ENCODE measurements at regions of chr3 and their contacts with region 1.

Region 1: GRCh38 chr3:154886437-154886836 is 193.7 kb upstream of the MME start:
- DNase-seq: peak; percentile 100
- ATAC-seq: peak; percentile 95
- H3K4me3 ChIP-seq: no peak overlapping the region
- H3K27ac ChIP-seq: peak overlapping the region; percentile 59
- H3K4me1 ChIP-seq: peaks cover 7% of the 10 kb centered on the region
- H3K27me3 ChIP-seq: no peaks in the 10 kb centered on the region
- CTCF ChIP-seq: no peak
- POLR2A ChIP-seq: peak; percentile 48; the same call in 1 of the 2 replicates
- RAD21 ChIP-seq: no peak

Region 2: GRCh38 chr3:154294016-154294415 is 592.4 kb before region 1 on chr3:
- CTCF ChIA-PET with region 1: no interaction called
- POLR2A ChIA-PET with region 1: no interaction called
- dilution Hi-C with region 1: no loop called
- in situ Hi-C with region 1: no loop called
- intact Hi-C with region 1: no loop called
- DNase-seq: no peak
- ATAC-seq: no peak
- H3K4me3 ChIP-seq: no peak overlapping the region
- H3K27ac ChIP-seq: no peak overlapping the region
- H3K4me1 ChIP-seq: no peaks in the 10 kb centered on the region
- H3K27me3 ChIP-seq: no peaks in the 10 kb centered on the region
- CTCF ChIP-seq: no peak
- POLR2A ChIP-seq: no peak
- RAD21 ChIP-seq: no peak

Region 3: DNA sequence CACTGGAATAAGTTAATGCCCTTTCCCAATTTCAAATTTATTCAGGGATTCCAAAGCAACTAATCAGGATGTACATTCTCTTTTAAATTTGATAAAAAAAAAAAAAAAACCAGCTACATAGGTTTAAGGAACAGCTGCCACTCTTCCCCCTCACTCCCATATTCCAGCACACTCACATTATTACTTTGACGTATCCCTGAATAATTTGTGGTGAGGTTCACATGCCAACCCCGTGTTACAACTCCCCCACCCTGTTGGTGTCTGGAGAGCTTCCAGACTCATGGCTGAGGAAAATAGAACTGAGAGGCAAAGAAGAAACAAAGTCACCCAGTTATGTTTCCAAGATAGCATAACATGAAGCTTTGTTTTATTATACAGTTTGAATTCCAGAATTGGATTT is 106.9 kb before region 1 on chr3:
- CTCF ChIA-PET with region 1: no interaction called
- POLR2A ChIA-PET with region 1: no interaction called
- dilution Hi-C with region 1: no loop called
- in situ Hi-C with region 1: no loop called
- intact Hi-C with region 1: loop called (anchors 5 kb)
- DNase-seq: peak; percentile 87
- ATAC-seq: no peak
- H3K4me3 ChIP-seq: no peak overlapping the region
- H3K27ac ChIP-seq: no peak overlapping the region; the same call in 1 of the 2 replicates
- H3K4me1 ChIP-seq: peaks cover 10% of the 10 kb centered on the region
- H3K27me3 ChIP-seq: no peaks in the 10 kb centered on the region; the same call in 1 of the 2 replicates
- CTCF ChIP-seq: no peak
- POLR2A ChIP-seq: no peak
- RAD21 ChIP-seq: no peak

Region 4: GRCh38 chr3:155070932-155071387 is 184.5 kb after region 1 on chr3:
- CTCF ChIA-PET with region 1: no interaction called
- POLR2A ChIA-PET with region 1: no interaction called
- dilution Hi-C with region 1: no loop called
- in situ Hi-C with region 1: loop called (anchors 10 kb)
- intact Hi-C with region 1: loop called (anchors 5 kb)
- DNase-seq: peak; percentile 99
- ATAC-seq: peak; percentile 93
- H3K4me3 ChIP-seq: no peak overlapping the region
- H3K27ac ChIP-seq: peak overlapping the region; percentile 58
- H3K4me1 ChIP-seq: peaks cover 7% of the 10 kb centered on the region
- H3K27me3 ChIP-seq: no peaks in the 10 kb centered on the region
- CTCF ChIP-seq: no peak
- POLR2A ChIP-seq: 0 out of 2 replicates have a peak, but pooled peaks have one; percentile 18
- RAD21 ChIP-seq: no peak; the same call in 1 of the 2 replicates

Region 5: DNA sequence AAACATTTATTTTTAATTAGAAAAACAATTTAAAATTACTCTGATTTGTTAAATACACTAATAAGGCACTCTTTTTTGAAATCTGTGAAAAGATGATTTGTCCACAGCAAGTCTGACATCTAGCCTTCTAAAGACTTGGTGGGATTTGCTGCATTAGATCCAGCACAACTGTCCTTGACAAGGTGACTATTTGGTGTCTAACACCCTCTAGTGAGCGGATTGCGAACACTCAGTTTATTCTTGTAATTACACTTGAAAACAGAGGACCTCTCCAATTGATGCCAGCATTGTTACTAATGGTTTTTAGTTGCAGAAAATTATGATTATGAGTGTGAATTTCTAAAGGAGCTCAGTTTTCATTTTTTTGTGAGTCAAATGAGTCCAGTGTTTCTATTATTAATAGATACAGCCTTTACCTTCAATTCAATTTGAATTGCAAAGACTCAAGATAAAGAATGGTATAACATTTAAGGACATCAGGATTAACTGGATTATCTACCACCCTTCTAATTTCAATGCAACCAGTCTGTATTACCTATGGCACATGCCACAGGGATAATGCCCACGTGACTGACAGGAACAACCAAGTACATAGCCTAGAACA is 436.7 kb after region 1 on chr3:
- CTCF ChIA-PET with region 1: no interaction called
- POLR2A ChIA-PET with region 1: no interaction called
- dilution Hi-C with region 1: no loop called
- in situ Hi-C with region 1: no loop called
- intact Hi-C with region 1: no loop called
- DNase-seq: peak; percentile 89
- ATAC-seq: peak; percentile 91
- H3K4me3 ChIP-seq: no peak overlapping the region
- H3K27ac ChIP-seq: no peak overlapping the region
- H3K4me1 ChIP-seq: no peaks in the 10 kb centered on the region
- H3K27me3 ChIP-seq: no peaks in the 10 kb centered on the region
- CTCF ChIP-seq: peak; percentile 88
- POLR2A ChIP-seq: no peak; the same call in 1 of the 2 replicates
- RAD21 ChIP-seq: peak; percentile 95

Measured in IMR-90 (cell line).